ENCODE measurements at regions of chr2 and their contacts with region 1.

Region 1: DNA sequence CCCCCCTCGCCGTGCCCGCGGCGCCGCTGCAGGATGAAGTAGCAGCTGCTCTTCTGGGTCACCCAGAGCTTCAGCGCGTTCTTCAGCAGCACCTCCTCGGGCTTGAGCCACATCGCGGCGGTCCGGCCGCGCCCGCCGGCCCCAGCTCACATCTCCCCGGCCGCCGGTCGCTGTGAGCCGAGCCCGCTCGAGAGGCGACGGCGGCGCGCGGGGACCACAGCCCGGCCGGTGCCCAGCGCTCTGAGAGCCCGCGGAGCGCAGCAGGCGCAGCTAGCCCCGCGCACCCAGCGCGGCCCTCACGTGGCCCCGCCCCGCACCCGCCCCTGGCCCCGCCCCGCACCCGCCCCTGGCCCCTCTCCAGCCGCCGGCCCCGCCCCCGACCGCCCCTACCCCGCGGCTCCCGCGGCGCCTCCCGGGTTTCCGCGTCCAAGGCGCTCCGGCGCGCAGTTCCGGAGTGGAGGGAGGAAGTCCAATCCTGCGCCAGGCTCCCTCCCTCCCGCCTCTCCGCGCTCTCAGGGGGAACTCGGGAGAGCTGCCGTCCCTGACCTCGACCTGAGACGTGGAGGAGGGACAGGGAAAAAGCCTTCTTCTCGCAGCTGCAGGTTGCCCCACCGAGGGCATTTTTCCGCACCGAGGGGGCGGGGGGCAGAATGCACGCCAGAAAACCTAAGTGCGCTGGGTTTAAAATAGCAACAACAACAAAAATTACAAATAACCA is at the start of gene TBC1D8:
- DNase-seq: peak; percentile 19 to 79 (median 47)
- ATAC-seq: peak; percentile 89
- H3K4me3 ChIP-seq: peak within 1 kb of the TSS; percentile 45
- H3K4me3 Mint-ChIP-seq: peak within 1 kb of the TSS; percentile 76 to 90 (median 86)
- H3K27ac ChIP-seq: no peak within 1 kb of the TSS
- H3K27ac Mint-ChIP-seq: peak within 1 kb of the TSS in 7 of 9 donors; percentile 14 to 79 (median 65)
- H3K4me1 ChIP-seq: peaks cover 8 to 19% of the 10 kb centered on the region in 2 donors
- H3K4me1 Mint-ChIP-seq: peaks cover 14 to 36% (median 25%) of the 10 kb centered on the region in 7 donors
- H3K27me3 ChIP-seq: peaks cover 0 to 4% of the 10 kb centered on the region in 2 donors
- H3K27me3 Mint-ChIP-seq: peaks cover 0 to 75% (median 16%) of the 10 kb centered on the region in 5 donors
- total RNA-seq, gene TBC1D8: 0.87 to 20.1 (median 2.4) TPM

Region 2: GRCh38 chr2:100562732-100563720 is 588.3 kb before region 1 on chr2 and contains the start of gene PDCL3:
- CTCF ChIA-PET with region 1: no interaction called
- POLR2A ChIA-PET with region 1: no interaction called
- intact Hi-C with region 1: loop called in 1 of 2 experiments (anchors 2 kb)
- DNase-seq: peak; percentile 91 to 97 (median 96)
- ATAC-seq: peak; percentile 94
- H3K4me3 ChIP-seq: peak within 1 kb of the TSS; percentile 99
- H3K4me3 Mint-ChIP-seq: peak within 1 kb of the TSS; percentile 85 to 100 (median 97)
- H3K27ac ChIP-seq: peak within 1 kb of the TSS; percentile 78
- H3K27ac Mint-ChIP-seq: peak within 1 kb of the TSS; percentile 97 to 99 (median 99)
- H3K4me1 ChIP-seq: peaks cover 15 to 16% of the 10 kb centered on the region in 2 donors
- H3K4me1 Mint-ChIP-seq: peaks cover 14 to 64% (median 52%) of the 10 kb centered on the region in 7 donors
- H3K27me3 ChIP-seq: no peaks in the 10 kb centered on the region
- H3K27me3 Mint-ChIP-seq: peaks cover 0 to 2% (median 0%) of the 10 kb centered on the region in 5 donors
- total RNA-seq, gene PDCL3: 16.6 to 31.9 (median 19.9) TPM

Region 3: DNA sequence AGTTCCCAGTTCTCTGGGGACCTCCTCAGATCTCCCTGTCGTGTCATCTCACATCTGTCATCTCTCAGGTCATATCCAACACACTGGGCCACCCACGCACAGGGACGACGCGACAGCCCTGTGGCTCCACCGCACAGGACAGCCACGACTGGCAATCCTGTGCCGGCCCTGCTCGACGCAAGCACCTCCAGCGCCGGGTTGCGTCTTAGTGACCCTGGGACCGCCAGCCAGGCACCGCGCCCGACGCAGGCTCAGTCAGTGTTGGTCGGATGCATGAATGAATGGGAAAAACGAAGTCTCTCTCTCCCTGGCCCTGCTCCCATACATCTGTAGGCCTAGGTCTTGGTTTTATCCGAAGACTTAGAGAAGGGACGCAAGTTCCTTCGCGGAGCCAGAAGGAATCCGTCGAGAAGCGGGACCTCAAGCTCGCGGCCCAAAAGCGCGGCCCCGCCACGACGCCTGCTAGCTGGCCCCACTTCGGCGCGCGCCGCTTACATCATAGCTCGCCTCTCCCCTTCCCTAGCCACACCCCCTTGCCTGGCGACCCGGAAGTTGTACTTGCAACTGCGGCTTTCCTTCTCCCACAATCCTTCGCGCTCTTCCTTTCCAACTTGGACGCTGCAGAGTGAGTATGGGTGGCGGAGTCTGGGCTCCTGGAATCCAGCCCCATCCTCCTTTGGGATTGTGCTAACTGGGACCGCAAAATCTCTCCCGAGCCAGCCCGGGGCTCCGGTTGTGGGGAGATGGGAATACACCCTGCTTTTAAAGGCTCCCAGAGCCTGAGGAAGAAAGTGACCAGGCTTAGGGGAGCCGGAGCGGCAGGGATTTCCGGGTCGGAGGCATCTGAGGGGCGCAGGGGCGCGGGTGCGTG is 149.4 kb before region 1 on chr2 and contains the start of gene RPL31:
- CTCF ChIA-PET with region 1: no interaction called
- POLR2A ChIA-PET with region 1: interaction called, 3 read pairs
- intact Hi-C with region 1: loop called (anchors 1 to 5 kb)
- DNase-seq: peak; percentile 86 to 97 (median 95)
- ATAC-seq: peak; percentile 99
- H3K4me3 ChIP-seq: peak within 1 kb of the TSS; percentile 93
- H3K4me3 Mint-ChIP-seq: peak within 1 kb of the TSS; percentile 91 to 99 (median 95)
- H3K27ac ChIP-seq: peak within 1 kb of the TSS; percentile 86
- H3K27ac Mint-ChIP-seq: peak within 1 kb of the TSS; percentile 88 to 99 (median 98)
- H3K4me1 ChIP-seq: peaks cover 16 to 18% of the 10 kb centered on the region in 2 donors
- H3K4me1 Mint-ChIP-seq: peaks cover 32 to 48% (median 44%) of the 10 kb centered on the region in 7 donors
- H3K27me3 ChIP-seq: no peaks in the 10 kb centered on the region
- H3K27me3 Mint-ChIP-seq: peaks cover 0 to 5% (median 0%) of the 10 kb centered on the region in 5 donors
- total RNA-seq, gene RPL31: 1,182 to 2,835 (median 2,548) TPM

Region 4: DNA sequence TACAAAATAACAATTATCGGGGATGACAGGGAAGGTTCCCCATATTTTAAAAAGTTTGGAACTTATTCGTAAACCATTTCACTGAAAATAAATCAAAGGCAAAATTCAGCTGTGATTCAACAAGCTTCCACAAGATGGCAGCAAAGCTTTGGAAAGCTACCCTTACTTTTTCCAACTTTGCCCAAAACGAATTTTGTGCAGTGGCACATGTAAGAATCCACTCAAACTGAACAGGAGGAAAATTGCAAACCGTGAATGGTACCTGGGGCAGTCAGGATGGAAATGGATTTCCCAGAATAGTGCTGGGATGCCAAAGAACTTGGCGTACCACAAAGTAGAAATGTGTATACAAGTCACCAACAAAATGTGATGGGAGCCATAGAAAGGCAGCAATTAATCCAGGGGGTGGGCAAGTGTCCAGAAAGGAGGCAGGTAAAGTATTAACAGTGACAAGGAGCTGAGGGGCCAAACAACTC is 138.6 kb before region 1 on chr2:
- CTCF ChIA-PET with region 1: interaction called, 5 read pairs
- POLR2A ChIA-PET with region 1: interaction called, 4 read pairs
- intact Hi-C with region 1: loop called in 1 of 2 experiments (anchors 1 kb)
- DNase-seq: peak in 7 of 9 donors; percentile 16 to 51 (median 38)
- ATAC-seq: no peak
- H3K4me3 ChIP-seq: no peak overlapping the region
- H3K4me3 Mint-ChIP-seq: no peak overlapping the region
- H3K27ac ChIP-seq: no peak overlapping the region
- H3K27ac Mint-ChIP-seq: no peak overlapping the region
- H3K4me1 ChIP-seq: no peaks in the 10 kb centered on the region
- H3K4me1 Mint-ChIP-seq: peaks cover 6 to 28% (median 12%) of the 10 kb centered on the region in 7 donors
- H3K27me3 ChIP-seq: no peaks in the 10 kb centered on the region
- H3K27me3 Mint-ChIP-seq: no peaks in the 10 kb centered on the region

Region 5: DNA sequence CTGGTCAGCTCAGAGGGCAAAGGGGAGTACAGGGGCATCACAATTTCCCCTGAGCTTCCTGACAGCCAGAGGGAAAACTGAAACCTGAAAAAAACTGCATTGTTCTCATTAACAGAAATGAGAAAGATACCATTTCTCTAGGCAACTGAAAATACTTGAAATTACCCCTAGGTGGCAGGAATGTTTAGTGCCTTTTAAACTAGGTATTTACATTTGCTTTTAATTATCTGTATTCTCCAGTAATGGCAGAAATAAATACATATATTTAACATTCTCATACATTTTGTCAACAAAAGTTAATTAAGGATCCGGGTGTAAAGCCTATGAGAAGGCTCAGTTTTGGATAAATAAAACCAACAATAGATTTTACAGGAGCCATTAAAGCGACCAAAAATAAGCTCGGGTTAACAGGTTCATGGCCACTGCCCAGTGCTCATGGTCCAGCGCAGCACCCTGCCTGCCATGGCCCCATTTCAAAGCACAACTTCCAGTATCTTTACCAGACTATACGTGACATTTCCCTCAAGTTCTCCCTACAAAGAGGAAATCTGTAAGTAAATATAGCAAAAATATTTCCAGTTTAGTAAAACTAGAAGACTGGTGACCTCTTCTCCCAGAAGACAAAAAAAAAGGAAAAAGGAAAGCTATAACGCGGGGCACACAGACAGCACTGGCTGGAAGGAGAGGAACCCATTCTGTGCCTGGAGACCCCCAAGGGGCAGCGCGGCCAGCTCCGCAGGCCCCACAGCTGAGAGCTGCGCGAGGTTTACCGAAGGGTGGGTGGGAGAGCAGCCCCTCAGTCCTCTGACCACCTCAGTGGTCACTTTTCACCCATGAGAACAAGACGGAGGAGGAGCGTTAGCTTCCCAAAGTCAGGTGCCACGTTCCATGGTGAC is 114.5 kb before region 1 on chr2:
- CTCF ChIA-PET with region 1: no interaction called
- POLR2A ChIA-PET with region 1: no interaction called
- intact Hi-C with region 1: loop called (anchors 5 kb)
- DNase-seq: no peak
- ATAC-seq: no peak
- H3K4me3 ChIP-seq: no peak overlapping the region
- H3K4me3 Mint-ChIP-seq: no peak overlapping the region
- H3K27ac ChIP-seq: no peak overlapping the region
- H3K27ac Mint-ChIP-seq: no peak overlapping the region
- H3K4me1 ChIP-seq: no peaks in the 10 kb centered on the region
- H3K4me1 Mint-ChIP-seq: peaks cover 0 to 6% (median 0%) of the 10 kb centered on the region in 7 donors
- H3K27me3 ChIP-seq: no peaks in the 10 kb centered on the region
- H3K27me3 Mint-ChIP-seq: peaks cover 0 to 4% (median 0%) of the 10 kb centered on the region in 5 donors

Region 6: DNA sequence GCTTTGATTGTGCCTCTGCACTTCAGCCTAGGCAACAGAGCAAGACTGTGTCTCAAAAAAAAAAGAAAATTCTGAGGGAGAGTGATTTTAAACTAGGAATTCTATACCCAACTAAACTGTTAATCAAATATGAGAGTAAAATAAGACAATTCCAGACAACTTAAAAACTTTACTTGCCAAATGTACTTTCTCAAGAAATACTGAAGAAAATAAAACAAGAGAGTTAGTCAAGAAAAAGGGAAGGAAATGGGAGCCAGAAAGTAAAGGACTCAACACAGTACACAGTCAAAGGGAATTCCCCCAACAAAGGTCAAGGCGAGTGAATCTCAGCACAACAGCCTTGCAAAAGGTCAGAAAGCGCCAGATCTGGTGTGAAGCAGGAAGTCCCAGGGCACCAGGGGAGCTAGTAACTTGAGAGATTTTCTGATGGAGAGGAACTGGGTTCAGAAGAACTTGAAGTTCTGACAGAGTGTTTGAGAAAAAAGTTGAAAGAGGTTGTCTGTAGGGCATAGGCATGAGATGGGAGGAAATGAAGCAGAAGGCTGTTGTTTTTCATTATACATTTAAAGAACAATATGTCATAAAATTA is 22.5 kb after region 1 on chr2:
- CTCF ChIA-PET with region 1: no interaction called
- POLR2A ChIA-PET with region 1: no interaction called
- intact Hi-C with region 1: loop called in 1 of 2 experiments (anchors 1 kb)
- DNase-seq: peak in 6 of 9 donors; percentile 18 to 67 (median 42)
- ATAC-seq: peak; percentile 98
- H3K4me3 ChIP-seq: no peak overlapping the region
- H3K4me3 Mint-ChIP-seq: peak overlapping the region in 9 of 10 donors; percentile 3 to 59 (median 22)
- H3K27ac ChIP-seq: peak overlapping the region; percentile 44
- H3K27ac Mint-ChIP-seq: peak overlapping the region in 8 of 9 donors; percentile 60 to 92 (median 81)
- H3K4me1 ChIP-seq: peaks cover 0 to 6% of the 10 kb centered on the region in 2 donors
- H3K4me1 Mint-ChIP-seq: peaks cover 9 to 30% (median 23%) of the 10 kb centered on the region in 7 donors
- H3K27me3 ChIP-seq: no peaks in the 10 kb centered on the region
- H3K27me3 Mint-ChIP-seq: no peaks in the 10 kb centered on the region

Region 7: DNA sequence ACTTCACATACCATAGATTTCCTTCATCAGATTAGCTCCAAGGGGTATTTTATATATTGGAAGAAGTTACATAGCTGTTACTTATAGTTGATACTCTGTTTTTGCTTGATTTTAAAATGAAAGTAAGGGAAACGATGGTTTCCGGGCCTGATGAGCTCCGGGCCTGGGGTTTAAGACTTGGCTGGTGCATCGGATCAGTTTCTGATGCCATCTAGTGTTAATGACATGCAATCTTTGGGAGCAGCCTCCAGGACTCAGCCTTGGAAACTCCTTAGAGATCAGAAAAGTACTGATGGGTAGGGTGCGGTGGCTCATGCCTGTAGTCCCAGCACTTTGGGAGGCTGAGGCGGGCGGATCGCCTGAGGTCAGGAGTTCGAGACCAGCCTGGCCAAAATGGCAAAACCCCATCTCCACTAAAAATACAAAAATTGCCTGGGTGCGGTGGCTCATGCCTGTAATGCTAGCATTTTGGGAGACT is 54.3 kb after region 1 on chr2:
- CTCF ChIA-PET with region 1: interaction called, 7 read pairs
- POLR2A ChIA-PET with region 1: interaction called, 4 read pairs
- intact Hi-C with region 1: loop called in 1 of 2 experiments (anchors 1 kb)
- DNase-seq: peak in 7 of 9 donors; percentile 44 to 72 (median 55)
- ATAC-seq: peak; percentile 94
- H3K4me3 ChIP-seq: no peak overlapping the region
- H3K4me3 Mint-ChIP-seq: peak overlapping the region; percentile 27 to 80 (median 66)
- H3K27ac ChIP-seq: peak overlapping the region; percentile 52
- H3K27ac Mint-ChIP-seq: peak overlapping the region; percentile 27 to 93 (median 87)
- H3K4me1 ChIP-seq: no peaks in the 10 kb centered on the region
- H3K4me1 Mint-ChIP-seq: peaks cover 4 to 14% (median 12%) of the 10 kb centered on the region in 7 donors
- H3K27me3 ChIP-seq: no peaks in the 10 kb centered on the region
- H3K27me3 Mint-ChIP-seq: peaks cover 0 to 5% (median 0%) of the 10 kb centered on the region in 5 donors